A673 (cell line): ENCODE measurements at regions of chr11 and their contacts with region 1.

Region 1: DNA sequence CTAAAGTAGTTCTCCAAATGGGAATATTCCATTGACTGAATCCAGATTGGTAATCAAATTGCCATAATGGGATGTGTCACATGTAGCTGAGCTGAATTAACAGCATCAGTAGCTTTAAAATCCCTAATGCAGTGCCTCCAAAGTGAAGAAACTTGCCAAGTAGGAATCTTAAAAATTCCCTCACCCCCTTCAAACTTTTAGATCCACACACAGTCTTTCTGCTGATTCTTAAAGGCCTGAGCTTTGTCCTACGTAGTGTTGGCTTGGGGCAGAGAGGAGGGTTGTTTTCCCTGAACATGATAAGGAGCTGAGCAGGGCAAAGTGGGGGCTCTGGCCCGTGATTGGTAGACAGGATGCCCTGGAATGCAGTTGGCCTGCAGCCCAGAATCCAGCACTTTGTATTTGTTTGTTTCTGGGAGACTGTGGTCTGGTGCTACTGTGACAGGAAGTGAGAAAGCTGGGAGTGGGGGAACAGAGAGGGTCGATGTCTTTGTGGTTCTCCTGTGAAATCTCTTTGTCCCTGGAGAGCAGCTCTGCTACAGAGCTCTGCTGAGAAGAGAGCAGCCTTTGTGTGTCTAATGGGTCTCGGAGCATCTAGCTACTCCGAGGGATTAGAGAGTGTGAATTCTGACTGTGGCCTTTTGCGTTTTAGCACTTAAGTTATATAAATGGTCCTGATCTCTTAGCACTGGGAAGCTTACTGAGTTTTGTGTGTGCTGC is 16.9 kb downstream of the CTNND1 start:
- DNase-seq: peak; percentile 100
- H3K4me3 ChIP-seq: peak overlapping the region; percentile 14
- H3K27ac ChIP-seq: peak overlapping the region; percentile 91
- H3K4me1 ChIP-seq: peaks cover 61% of the 10 kb centered on the region
- H3K27me3 ChIP-seq: no peaks in the 10 kb centered on the region
- CTCF ChIP-seq: no peak

Region 2: DNA sequence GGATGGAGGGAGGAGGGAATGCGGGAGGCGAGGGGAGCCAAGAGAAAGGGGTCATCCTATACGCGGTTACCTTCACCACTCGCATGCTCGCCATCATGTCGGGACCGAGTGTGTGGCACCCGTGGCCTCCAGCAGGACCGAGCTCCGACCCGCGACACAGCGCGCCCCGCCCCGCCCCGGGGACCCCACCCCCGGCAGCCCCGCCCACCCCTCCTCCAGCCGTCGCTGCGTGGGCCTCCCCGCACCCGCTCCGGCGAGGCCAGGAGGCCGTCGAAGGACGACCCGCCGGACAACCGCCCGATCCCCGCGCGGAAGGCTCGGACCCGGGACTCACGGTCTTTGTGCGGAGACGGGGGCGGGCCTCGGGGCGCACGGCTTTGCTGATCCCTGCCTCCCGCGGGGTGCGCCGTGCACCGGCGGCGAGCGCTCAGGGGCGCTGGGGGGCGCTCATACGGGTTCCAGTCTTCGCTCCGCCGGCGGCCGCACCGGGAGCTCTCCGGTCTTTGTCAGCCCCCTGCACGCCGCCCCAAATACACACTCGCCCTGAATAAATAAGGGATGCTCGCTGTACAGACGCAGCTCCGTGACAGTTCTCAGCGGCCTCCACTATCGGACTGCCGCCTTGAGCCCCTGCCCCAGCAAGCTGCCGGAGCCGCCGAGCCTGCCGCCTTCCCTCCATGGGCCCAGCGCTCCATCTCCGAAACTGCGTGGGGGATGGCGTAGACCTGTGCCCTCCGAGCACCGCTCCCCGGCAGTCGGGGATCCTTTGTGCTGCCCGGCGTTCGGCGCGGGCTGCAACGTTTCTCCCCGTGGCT is 210.8 kb before region 1 on chr11 and contains the start of gene UBE2L6:
- CTCF ChIA-PET with region 1: no interaction called
- POLR2A ChIA-PET with region 1: interaction called, 10 read pairs
- intact Hi-C with region 1: no loop called
- DNase-seq: peak; percentile 68
- H3K4me3 ChIP-seq: peak within 1 kb of the TSS; percentile 68
- H3K27ac ChIP-seq: peak within 1 kb of the TSS; percentile 68
- H3K4me1 ChIP-seq: no peaks in the 10 kb centered on the region
- H3K27me3 ChIP-seq: no peaks in the 10 kb centered on the region
- CTCF ChIP-seq: peak; percentile 98
- total RNA-seq, gene UBE2L6: 30.4 and 38.8 TPM in 2 replicates

Region 3: DNA sequence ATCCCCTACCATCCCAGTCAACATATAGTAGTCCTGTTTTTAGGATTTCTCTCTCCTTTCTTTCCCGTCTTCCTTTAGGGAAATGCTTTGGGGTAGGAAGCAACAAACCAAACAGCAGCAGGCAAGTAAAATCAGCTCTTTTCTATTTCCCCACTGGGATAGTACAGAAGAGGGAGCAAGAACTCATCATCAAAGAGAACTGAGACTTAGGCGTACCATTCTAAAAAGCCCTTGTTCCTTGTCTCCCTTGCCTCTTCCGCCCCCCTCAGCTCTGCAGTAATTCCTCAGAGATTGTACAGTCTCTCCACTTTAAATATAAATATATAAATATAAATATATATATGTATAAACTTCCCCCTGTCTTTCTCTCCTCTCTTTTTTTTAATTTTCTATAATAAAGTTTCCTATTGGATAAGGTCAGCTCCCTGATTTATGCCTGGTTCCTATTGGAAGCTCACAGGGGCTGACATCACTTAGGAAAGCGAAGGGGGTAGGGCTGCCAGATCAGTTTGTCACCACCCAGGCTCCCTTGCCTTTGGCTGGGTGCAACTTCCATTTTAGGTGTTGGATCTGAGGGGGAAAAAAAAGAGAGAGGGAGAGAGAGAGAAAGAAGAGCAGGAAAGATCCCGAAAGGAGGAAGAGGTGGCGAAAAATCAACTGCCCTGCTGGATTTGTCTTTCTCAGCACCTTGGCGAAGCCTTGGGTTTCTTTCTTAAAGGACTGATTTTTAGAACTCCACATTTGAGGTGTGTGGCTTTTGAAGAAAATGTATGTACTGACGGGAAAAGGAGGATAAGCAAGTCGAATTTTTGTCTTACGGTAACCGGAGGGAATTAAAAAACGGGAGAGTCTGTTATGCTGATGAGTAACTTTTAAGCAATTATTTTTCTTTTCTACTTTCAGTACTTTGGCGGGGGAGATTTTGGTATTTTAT is 16.9 kb before region 1 on chr11 and contains the start of gene CTNND1:
- CTCF ChIA-PET with region 1: interaction called, 4 read pairs
- POLR2A ChIA-PET with region 1: interaction called, 5 read pairs
- intact Hi-C with region 1: loop called (anchors 2 kb)
- DNase-seq: peak; percentile 99
- H3K4me3 ChIP-seq: peak within 1 kb of the TSS; percentile 84
- H3K27ac ChIP-seq: peak within 1 kb of the TSS; percentile 98
- H3K4me1 ChIP-seq: peaks cover 20% of the 10 kb centered on the region
- H3K27me3 ChIP-seq: no peaks in the 10 kb centered on the region
- CTCF ChIP-seq: no peak
- total RNA-seq, gene CTNND1: 133 and 174 TPM in 2 replicates